Activated CD4-positive, alpha-beta T cell treated with anti-CD3 and anti-CD28 coated beads, Interleukin-2, amount 10 ng/mL, durations not matched to agents 7 days and 5 days (primary cell): ENCODE measurements at regions of chr12 and their contacts with region 1.

Region 1: GRCh38 chr12:57111031-57111734 is at the start of gene STAT6:
- DNase-seq: peak; percentile 95
- H3K4me3 Mint-ChIP-seq: peak within 1 kb of the TSS; percentile 88
- H3K27ac Mint-ChIP-seq: peak within 1 kb of the TSS; percentile 95
- H3K4me1 Mint-ChIP-seq: peaks cover 54% of the 10 kb centered on the region
- H3K27me3 Mint-ChIP-seq: no peaks in the 10 kb centered on the region
- total RNA-seq, gene STAT6: 239 to 242 TPM

Region 2: DNA sequence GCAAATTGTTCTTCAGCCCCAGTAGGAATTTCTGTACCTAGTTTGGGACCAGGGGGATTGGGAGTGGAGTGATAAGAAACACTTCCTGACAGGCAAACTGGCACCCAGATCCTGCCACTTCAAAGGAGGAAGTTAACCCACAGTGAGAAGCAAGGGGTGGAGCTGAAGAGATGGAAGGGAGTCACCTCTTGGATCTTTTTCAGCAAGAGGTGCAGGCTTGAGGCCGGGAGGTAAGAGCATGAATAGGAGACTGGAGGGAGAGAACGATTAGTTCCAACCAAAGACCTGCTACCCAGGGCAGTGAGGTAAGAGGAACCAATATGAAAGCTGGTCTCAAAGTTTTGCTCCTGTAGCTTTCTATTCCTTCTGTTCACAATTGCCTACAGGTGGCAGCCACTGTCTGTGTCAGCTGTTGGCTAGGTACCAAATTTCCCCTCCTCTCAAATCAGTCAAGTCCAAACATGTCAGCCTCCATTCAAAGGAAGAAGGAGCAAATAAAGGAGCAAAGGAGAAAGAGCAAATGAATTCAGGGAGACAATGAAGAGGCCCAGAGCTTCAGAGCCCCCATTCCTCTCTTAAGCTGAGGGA is 80.0 kb before region 1 on chr12:
- CTCF ChIA-PET with region 1: interaction called, 10 read pairs
- POLR2A ChIA-PET with region 1: no interaction called
- DNase-seq: peak; percentile 39
- H3K4me3 Mint-ChIP-seq: no peak overlapping the region
- H3K27ac Mint-ChIP-seq: peak overlapping the region; percentile 28
- H3K4me1 Mint-ChIP-seq: peaks cover 47% of the 10 kb centered on the region
- H3K27me3 Mint-ChIP-seq: no peaks in the 10 kb centered on the region

Region 3: DNA sequence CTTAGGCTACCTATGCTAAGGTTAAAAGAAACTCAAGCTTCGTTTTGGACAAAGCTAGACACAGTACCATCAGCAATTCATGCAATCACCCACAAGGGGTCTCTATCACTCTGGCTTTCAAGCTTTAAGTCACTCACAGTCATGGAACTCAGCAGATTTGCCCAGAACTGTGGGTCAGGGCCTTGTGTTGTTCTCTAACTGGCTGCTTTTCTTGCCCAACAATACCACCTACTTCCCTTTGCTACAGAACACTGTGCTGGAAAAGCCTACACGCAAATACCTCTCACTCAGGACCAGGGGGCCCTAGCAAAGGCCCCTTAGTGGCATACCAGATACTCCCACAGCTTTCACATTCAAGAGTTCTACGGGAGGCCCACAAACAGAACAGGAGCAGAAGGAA is 41.7 kb before region 1 on chr12:
- CTCF ChIA-PET with region 1: interaction called, 98 read pairs
- POLR2A ChIA-PET with region 1: interaction called, 19 read pairs
- DNase-seq: peak; percentile 79
- H3K4me3 Mint-ChIP-seq: no peak overlapping the region
- H3K27ac Mint-ChIP-seq: peak overlapping the region; percentile 86
- H3K4me1 Mint-ChIP-seq: peaks cover 51% of the 10 kb centered on the region
- H3K27me3 Mint-ChIP-seq: no peaks in the 10 kb centered on the region

Region 4: GRCh38 chr12:57088459-57089248 is 22.5 kb before region 1 on chr12 and contains the start of gene NAB2:
- CTCF ChIA-PET with region 1: interaction called, 90 read pairs
- POLR2A ChIA-PET with region 1: interaction called, 5 read pairs
- DNase-seq: peak; percentile 96
- H3K4me3 Mint-ChIP-seq: peak within 1 kb of the TSS; percentile 83
- H3K27ac Mint-ChIP-seq: peak within 1 kb of the TSS; percentile 94
- H3K4me1 Mint-ChIP-seq: peaks cover 64% of the 10 kb centered on the region
- H3K27me3 Mint-ChIP-seq: no peaks in the 10 kb centered on the region
- total RNA-seq, gene NAB2: 5.5 to 6.8 TPM

Region 5: GRCh38 chr12:57148469-57149244 is 37.5 kb after region 1 on chr12:
- CTCF ChIA-PET with region 1: interaction called, 10 read pairs
- POLR2A ChIA-PET with region 1: no interaction called
- DNase-seq: no peak
- H3K4me3 Mint-ChIP-seq: no peak overlapping the region
- H3K27ac Mint-ChIP-seq: no peak overlapping the region
- H3K4me1 Mint-ChIP-seq: peaks cover under 1% of the 10 kb centered on the region
- H3K27me3 Mint-ChIP-seq: no peaks in the 10 kb centered on the region